K562 (cell line): ENCODE measurements at regions of chr4 and their contacts with region 1.

Region 1: GRCh38 chr4:71749008-71749594 is 34.8 kb downstream of the GC start:
- DNase-seq: no peak
- ATAC-seq: no peak
- H3K4me3 ChIP-seq: no peak overlapping the region
- H3K27ac ChIP-seq: no peak overlapping the region
- H3K4me1 ChIP-seq: no peaks in the 10 kb centered on the region
- H3K27me3 ChIP-seq: no peaks in the 10 kb centered on the region
- CTCF ChIP-seq: no peak
- EP300 ChIP-seq: no peak
- POLR2A ChIP-seq: no peak
- RAD21 ChIP-seq: no peak

Region 2: DNA sequence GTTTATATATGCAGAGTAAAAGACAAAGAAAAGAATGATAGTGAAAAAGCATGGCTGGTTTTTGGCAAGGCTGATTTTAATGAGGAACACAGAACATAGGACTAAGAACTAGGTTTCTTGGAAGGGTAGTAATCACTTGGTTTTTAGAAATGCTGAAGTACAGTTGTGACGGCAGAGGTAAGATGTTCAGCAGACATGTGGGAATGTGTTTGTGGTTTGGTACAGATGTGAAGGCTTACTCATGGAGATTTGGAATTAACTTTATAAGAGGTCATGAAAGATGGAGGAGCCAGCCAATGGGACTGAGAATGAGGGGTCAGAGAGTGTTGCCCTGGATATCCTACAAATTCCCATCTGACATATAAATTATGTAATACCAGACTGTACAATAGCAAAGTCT is 526.3 kb after region 1 on chr4:
- CTCF ChIA-PET with region 1: no interaction called
- POLR2A ChIA-PET with region 1: no interaction called
- in situ Hi-C with region 1: loop called (anchors 25 kb)
- intact Hi-C with region 1: loop called (anchors 10 kb)
- DNase-seq: no peak
- ATAC-seq: no peak
- H3K4me3 ChIP-seq: no peak overlapping the region
- H3K27ac ChIP-seq: no peak overlapping the region
- H3K4me1 ChIP-seq: no peaks in the 10 kb centered on the region
- H3K27me3 ChIP-seq: no peaks in the 10 kb centered on the region
- CTCF ChIP-seq: no peak
- EP300 ChIP-seq: no peak
- POLR2A ChIP-seq: no peak
- RAD21 ChIP-seq: no peak